Ascending aorta (tissue), 2 donors: ENCODE measurements at regions of chr2 and their contacts with region 1.

Region 1: DNA sequence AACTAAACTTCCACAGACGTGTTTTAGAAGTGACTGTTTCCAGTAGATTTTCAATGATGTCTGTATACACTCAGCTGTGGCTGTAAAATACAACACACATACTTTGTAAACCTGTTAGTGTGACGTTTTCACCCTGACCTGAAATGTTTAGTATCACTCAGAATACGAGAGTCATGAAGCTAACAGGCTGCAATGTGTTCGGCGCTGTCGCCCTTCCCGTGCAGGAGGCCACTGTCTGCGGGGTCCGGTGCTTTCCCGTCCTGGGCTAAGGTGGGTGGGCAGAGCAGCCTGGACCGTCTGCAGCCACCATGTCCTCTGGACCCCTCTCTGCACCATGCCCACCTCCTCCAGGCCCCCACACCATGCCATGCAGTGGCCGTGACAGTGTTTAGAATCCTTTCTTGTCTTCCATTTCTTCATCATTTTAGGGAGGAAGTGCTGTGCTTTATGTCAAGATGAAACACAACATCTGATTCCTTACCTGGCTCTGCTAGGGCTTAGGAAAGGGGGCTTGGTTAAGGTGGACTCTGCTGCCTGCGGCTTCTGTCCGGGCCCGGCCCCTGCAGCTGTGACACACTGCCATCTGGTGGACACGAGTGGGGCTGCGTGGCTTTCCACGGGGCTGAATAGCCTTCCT is 53.8 kb upstream of the RBM44 start:
- DNase-seq: peak in 1 of 2 donors; percentile 89
- H3K4me3 ChIP-seq: peak overlapping the region in 1 of 2 donors; percentile 13
- H3K27ac ChIP-seq: peak overlapping the region; percentile 42 to 87
- H3K4me1 ChIP-seq: peaks cover 15 to 41% of the 10 kb centered on the region in 2 donors
- H3K27me3 ChIP-seq: no peaks in the 10 kb centered on the region
- CTCF ChIP-seq: peak; percentile 90 to 97 (median 95)

Region 2: DNA sequence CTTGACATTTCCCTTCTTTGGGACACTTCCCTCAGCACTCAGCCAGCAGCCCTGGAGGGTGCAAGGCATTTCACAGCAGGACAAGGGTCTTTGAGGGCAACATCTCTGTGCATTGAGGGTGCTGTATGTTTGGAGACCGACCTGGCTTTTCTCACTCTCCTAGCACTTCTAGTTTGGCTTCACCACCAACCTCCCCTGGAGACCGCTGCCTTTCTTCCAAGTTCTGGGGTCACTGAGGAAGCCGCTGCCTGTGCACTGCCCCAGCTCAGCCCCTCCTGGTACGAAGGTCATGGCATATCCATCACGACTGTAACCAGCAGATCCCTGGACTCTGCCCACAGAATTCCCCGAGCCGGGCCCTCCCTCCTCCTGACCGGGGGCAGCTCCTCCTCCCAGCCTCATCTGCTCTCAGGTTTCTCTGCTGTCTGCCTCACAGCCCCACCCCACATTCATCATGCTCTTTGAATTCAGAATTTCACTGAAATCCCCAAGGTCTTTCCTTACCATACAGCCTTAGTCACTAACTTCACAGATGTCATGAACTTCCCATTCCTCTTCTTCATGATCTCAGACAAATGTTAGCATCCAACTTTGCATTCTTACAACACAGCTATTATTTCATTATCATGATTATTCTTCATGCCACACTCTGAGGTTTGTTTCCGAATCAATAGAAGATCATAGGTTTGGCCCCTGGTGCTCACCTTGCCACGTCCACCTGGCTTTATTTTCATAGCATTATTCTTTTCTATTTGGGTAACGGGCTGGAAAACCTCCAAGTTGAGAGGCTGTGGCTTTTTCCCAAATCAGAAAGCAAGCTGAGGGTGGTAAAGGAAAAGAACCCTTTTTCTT is 772.0 kb before region 1 on chr2:
- intact Hi-C with region 1: no loop called
- DNase-seq: peak in 1 of 2 donors; percentile 74
- H3K4me3 ChIP-seq: no peak overlapping the region
- H3K27ac ChIP-seq: peak overlapping the region in 1 of 2 donors; percentile 42
- H3K4me1 ChIP-seq: no peaks in the 10 kb centered on the region
- H3K27me3 ChIP-seq: no peaks in the 10 kb centered on the region
- CTCF ChIP-seq: no peak

Region 3: GRCh38 chr2:237512774-237513466 is 231.8 kb before region 1 on chr2:
- intact Hi-C with region 1: loop called (anchors 5 kb)
- DNase-seq: peak; percentile 25 to 91
- H3K4me3 ChIP-seq: no peak overlapping the region
- H3K27ac ChIP-seq: no peak overlapping the region
- H3K4me1 ChIP-seq: no peaks in the 10 kb centered on the region
- H3K27me3 ChIP-seq: no peaks in the 10 kb centered on the region
- CTCF ChIP-seq: peak; percentile 77 to 93 (median 92)

Region 4: GRCh38 chr2:237581751-237582746 is 162.7 kb before region 1 on chr2:
- intact Hi-C with region 1: loop called (anchors 1 kb)
- DNase-seq: peak in 1 of 2 donors; percentile 91
- H3K4me3 ChIP-seq: peak overlapping the region in 1 of 2 donors; percentile 56
- H3K27ac ChIP-seq: peak overlapping the region; percentile 82 to 87
- H3K4me1 ChIP-seq: peaks cover 6 to 10% of the 10 kb centered on the region in 2 donors
- H3K27me3 ChIP-seq: no peaks in the 10 kb centered on the region
- CTCF ChIP-seq: peak; percentile 47 to 64 (median 63)

Region 5: GRCh38 chr2:237674731-237675276 is 69.9 kb before region 1 on chr2:
- intact Hi-C with region 1: loop called (anchors 5 kb)
- DNase-seq: peak; percentile 83 to 95
- H3K4me3 ChIP-seq: peak overlapping the region; percentile 32 to 57
- H3K27ac ChIP-seq: peak overlapping the region; percentile 83 to 86
- H3K4me1 ChIP-seq: peaks cover 14 to 59% of the 10 kb centered on the region in 2 donors
- H3K27me3 ChIP-seq: no peaks in the 10 kb centered on the region
- CTCF ChIP-seq: peak in 1 of 3 experiments; percentile 26

Region 6: DNA sequence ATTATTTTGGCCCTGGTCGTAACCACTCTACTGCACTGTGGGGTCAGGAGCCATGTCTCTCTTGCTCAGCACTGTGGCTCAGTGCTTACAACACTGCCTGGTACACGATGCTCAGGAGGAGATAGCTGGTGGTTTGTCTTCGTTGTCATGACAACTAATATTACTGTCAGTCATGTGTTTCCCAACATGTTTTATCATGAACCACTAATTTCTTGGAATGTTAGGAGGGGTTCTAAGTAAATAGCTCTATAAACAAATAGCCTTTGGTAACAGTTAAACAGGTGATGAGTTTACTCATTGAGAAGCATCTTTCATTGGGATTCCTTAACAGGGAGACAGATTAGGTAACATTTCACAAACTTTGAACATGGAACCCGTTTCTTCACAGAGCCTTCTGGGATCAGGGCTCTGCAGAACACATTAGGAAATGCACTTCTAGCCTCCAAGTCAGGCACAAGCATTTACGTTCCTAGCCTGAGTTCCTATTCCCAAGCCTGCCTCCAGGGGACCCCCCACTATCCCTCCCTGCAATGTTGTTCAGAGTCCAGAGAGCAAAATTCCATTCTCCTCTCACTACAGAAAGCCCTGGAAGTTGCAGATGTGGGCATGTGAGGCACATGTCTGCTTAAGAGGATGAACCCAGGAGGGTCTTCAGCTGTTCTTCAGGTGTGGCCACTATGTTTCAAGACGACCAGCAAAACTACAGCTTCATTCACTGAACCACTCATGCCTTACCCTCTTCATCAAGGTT is 47.4 kb after region 1 on chr2:
- intact Hi-C with region 1: no loop called
- DNase-seq: no peak
- H3K4me3 ChIP-seq: no peak overlapping the region
- H3K27ac ChIP-seq: no peak overlapping the region
- H3K4me1 ChIP-seq: no peaks in the 10 kb centered on the region
- H3K27me3 ChIP-seq: no peaks in the 10 kb centered on the region
- CTCF ChIP-seq: no peak

Region 7: DNA sequence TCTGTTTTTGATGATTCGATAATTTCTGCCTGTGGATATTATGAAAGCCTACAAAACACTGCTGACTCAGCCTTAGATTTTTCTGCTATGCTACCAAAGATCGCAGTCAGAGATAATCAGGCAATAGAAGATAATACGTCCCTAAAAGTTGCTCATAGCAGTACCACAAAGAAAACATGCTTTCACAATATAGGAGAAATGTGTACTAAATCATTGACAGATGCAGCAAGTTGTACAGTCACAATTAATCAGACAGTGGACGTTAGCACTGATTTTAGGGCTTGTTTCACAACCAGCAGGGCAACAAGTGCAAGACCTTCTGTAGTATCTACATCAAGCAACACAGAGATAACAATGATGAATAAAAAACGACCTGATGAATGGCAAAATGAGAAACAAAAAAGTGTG is 73.3 kb after region 1 on chr2:
- intact Hi-C with region 1: no loop called
- DNase-seq: no peak
- H3K4me3 ChIP-seq: no peak overlapping the region
- H3K27ac ChIP-seq: no peak overlapping the region
- H3K4me1 ChIP-seq: no peaks in the 10 kb centered on the region
- H3K27me3 ChIP-seq: no peaks in the 10 kb centered on the region
- CTCF ChIP-seq: no peak